ENCODE measurements at regions of chr16 and their contacts with region 1.

Region 1: DNA sequence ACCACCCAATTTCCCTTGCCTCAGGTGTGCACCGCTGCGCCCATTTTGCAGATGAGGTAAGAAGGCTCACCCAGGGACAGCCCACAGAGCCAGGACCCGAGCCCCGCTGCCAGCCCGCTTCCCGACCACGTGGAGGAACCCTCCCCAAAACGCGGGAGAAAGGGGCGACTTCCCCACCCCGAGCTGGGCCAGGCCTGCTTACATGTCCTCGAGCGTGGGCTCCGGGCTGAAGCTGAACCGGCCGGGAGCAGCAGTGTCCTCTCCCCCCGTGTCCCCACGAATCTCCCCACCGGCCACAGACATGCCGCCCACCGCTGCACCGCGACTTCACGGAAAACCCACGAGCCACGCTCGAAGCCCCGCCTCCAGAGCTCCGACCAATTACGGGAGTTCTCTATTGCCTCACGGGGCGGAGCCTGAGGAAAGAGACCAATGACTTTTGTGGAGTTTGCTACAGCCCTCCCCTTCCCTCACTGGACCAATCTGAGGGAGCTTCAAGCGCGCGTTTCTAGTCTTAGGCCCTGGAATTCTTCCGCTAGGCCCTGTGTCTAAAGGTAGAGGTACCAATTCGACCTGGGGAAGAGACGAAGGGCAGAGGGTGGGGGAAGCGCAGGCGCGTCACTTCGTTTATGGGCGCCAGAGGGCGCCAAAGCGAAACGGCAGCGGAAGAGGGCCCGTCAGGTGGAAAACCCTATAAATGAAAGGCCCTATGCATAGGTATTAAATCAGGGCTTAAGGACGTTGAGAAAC is at the start of gene DCTPP1:
- DNase-seq: peak; percentile 99
- ATAC-seq: peak; percentile 98
- H3K4me3 ChIP-seq: peak within 1 kb of the TSS; percentile 93
- H3K27ac ChIP-seq: peak within 1 kb of the TSS; percentile 81
- H3K4me1 ChIP-seq: peaks cover 13% of the 10 kb centered on the region
- H3K27me3 ChIP-seq: no peaks in the 10 kb centered on the region
- CTCF ChIP-seq: peak; percentile 85 to 92 (median 90)
- EP300 ChIP-seq: 0 out of 4 replicates have a peak, but pooled peaks of 1 of the 2 experiments have one; percentile 30
- POLR2A ChIP-seq: peak; percentile 84
- RAD21 ChIP-seq: peak; percentile 78
- polyA plus RNA-seq, gene DCTPP1: 76.6 to 162 TPM

Region 2: GRCh38 chr16:29729116-29729521 is 700.7 kb before region 1 on chr16:
- CTCF ChIA-PET with region 1: no interaction called
- POLR2A ChIA-PET with region 1: no interaction called
- RAD21 ChIA-PET with region 1: no interaction called
- SMC1A ChIA-PET with region 1: no interaction called
- in situ Hi-C with region 1: no loop called
- intact Hi-C with region 1: no loop called
- DNase-seq: no peak
- ATAC-seq: no peak
- H3K4me3 ChIP-seq: no peak overlapping the region
- H3K27ac ChIP-seq: no peak overlapping the region
- H3K4me1 ChIP-seq: peaks cover 17% of the 10 kb centered on the region
- H3K27me3 ChIP-seq: no peaks in the 10 kb centered on the region
- CTCF ChIP-seq: peak; percentile 44 to 56 (median 54); a peak in 5 of 6 replicates
- EP300 ChIP-seq: no peak
- POLR2A ChIP-seq: no peak
- RAD21 ChIP-seq: peak; percentile 36

Region 3: DNA sequence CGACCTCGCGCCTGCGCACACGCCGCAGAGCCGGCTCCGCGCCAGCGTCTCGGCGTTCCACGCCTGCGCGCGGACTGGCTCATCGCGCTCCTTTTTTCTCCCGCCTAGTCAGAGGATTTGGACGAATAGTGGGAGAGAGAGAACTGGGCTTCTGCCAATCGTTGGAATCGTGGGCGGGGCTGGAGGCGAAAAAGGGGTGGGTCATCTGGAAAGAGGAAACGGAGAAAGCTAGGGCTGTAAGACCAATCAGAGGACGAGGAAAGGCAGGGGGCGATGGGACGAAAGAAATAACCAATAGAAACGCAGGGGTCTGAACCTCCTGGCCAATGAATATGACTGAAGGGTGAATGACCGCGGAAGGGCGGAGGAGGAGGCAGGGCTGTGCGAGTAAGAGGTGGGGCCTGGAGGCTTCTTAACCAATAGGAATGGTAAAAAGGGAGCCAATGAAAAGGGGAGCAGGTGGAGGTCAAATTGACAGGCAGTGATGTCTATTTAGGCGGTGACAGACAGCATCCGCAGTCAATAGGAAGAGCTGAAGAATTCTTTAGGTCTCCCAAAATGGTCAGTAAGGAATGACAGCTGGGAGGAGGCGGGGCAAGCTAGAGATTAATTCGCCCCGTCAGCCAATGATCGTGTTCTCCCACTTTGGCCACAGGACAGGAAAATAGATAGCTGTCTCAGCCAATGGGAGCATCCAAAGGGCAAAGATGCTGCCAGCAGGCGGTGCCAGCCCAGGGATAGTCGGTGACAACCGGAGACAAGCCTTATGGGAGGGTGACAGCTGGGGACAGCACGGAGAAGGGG is 59.2 kb before region 1 on chr16 and contains the start of gene TBC1D10B:
- CTCF ChIA-PET with region 1: interaction called, 10 read pairs
- POLR2A ChIA-PET with region 1: interaction called, 4 read pairs
- RAD21 ChIA-PET with region 1: interaction called, 15 read pairs
- SMC1A ChIA-PET with region 1: no interaction called
- in situ Hi-C with region 1: no loop called
- intact Hi-C with region 1: no loop called
- DNase-seq: peak; percentile 100
- ATAC-seq: peak; percentile 91
- H3K4me3 ChIP-seq: peak within 1 kb of the TSS; percentile 97
- H3K27ac ChIP-seq: peak within 1 kb of the TSS; percentile 77
- H3K4me1 ChIP-seq: peaks cover 16% of the 10 kb centered on the region
- H3K27me3 ChIP-seq: no peaks in the 10 kb centered on the region
- CTCF ChIP-seq: peak in 2 of 3 experiments; percentile 13 to 24; a peak in 3 of 6 replicates
- EP300 ChIP-seq: no peak
- POLR2A ChIP-seq: no peak; the same call in 1 of the 2 replicates
- RAD21 ChIP-seq: no peak
- polyA plus RNA-seq, gene TBC1D10B: 2.2 to 4.4 TPM

Region 4: DNA sequence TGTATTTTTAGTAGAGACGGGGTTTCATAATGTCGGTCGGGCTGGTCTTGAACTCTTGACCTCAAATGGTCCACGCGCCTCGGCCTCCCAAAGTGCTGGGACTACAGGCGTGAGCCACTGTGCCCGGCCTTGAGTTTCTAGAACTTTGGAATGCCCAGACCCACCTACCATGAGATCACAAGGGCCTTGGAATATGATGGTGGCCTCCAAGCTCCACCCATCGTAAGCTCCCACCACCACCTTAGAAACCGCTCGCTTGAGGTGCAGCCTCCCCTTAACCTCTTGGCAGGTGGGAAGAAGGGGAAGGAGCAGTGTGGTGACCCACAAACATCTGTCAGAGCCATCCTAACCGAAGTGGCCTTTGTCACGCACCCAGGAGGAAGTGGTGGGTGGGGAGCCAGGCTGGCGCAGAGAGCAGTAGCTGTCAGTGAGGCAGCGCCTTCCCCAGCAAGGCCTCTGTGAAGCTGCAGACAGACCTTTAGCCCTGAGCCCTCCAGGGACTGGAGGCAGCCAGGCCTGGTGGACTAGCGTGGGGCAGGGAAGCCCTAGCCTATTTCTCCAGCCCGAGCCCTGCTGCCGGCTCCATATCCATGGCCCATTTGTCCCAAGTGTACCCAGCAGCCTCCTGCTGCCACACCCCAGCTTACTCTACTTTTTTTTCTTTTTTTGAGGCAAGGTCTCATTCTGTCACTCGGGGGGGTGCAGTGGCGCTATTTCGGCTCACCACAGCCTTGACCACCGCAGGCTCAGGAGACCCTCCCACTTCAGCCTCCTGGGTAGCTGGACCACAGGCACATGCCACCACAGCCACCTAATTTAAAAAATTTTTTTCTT is 28.9 kb after region 1 on chr16:
- CTCF ChIA-PET with region 1: interaction called, 52 read pairs
- POLR2A ChIA-PET with region 1: interaction called, 12 read pairs
- RAD21 ChIA-PET with region 1: interaction called, 44 read pairs
- SMC1A ChIA-PET with region 1: interaction called, 24 read pairs
- in situ Hi-C with region 1: no loop called
- intact Hi-C with region 1: loop called (anchors 2 kb)
- DNase-seq: peak; percentile 97
- ATAC-seq: peak; percentile 86
- H3K4me3 ChIP-seq: peak overlapping the region; percentile 9; the same call in 1 of the 2 replicates
- H3K27ac ChIP-seq: peak overlapping the region; percentile 89
- H3K4me1 ChIP-seq: peaks cover 47% of the 10 kb centered on the region
- H3K27me3 ChIP-seq: no peaks in the 10 kb centered on the region
- CTCF ChIP-seq: no peak
- EP300 ChIP-seq: peak; percentile 99 to 100
- POLR2A ChIP-seq: peak; percentile 96
- RAD21 ChIP-seq: 0 out of 2 replicates have a peak, but pooled peaks have one; percentile 22

Region 5: DNA sequence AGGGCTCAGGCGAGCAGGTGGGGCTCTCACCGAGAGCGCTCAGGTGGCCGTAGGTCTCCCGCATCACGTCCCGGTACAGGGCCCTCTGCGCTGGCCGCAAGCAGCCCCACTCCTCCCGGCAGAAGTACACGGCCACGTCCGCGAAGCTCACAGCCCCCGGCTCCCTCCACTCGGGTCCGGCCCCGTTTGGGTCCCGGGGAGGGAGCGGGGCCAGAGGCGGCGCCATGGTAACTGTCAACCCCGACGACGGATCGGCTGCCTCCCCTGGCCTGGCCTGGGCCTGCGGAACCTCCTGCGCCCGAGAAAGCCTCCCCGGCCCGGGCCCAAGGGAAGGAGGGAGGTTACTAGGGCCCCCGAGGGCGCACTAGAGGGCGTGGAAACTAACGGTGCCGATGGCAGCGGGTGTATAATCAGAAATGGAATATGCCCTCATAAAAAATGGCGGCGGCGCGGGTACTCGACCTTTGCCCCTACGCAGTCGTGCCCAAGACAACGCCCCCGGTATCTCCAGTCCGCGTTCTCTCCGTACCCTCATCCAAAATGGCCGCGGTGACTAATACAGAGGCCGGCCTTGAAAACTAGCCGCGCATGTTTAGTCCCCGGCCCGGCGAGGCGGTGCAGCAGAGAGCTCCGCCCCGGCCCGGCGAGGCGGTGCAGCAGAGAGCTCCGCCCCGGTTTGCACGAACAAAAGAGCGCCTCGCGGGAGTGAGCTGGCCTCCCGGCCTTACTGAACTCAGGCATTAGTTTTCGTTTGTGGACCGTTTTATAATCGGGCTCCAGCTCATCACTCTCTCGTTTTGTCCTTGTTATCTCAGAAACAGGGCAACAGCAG is 128.3 kb after region 1 on chr16 and contains the start of gene ZNF764:
- CTCF ChIA-PET with region 1: interaction called, 23 read pairs
- POLR2A ChIA-PET with region 1: interaction called, 3 read pairs
- RAD21 ChIA-PET with region 1: interaction called, 34 read pairs
- SMC1A ChIA-PET with region 1: interaction called, 11 read pairs
- in situ Hi-C with region 1: no loop called
- intact Hi-C with region 1: no loop called
- DNase-seq: peak; percentile 84
- ATAC-seq: peak; percentile 96
- H3K4me3 ChIP-seq: peak within 1 kb of the TSS; percentile 87
- H3K27ac ChIP-seq: peak within 1 kb of the TSS; percentile 85
- H3K4me1 ChIP-seq: no peaks in the 10 kb centered on the region
- H3K27me3 ChIP-seq: no peaks in the 10 kb centered on the region
- CTCF ChIP-seq: peak; percentile 1 to 9 (median 2); a peak in 1 of 6 replicates
- EP300 ChIP-seq: no peak
- POLR2A ChIP-seq: peak; percentile 68
- RAD21 ChIP-seq: no peak
- polyA plus RNA-seq, gene ZNF764: 0.61 to 1.6 TPM

Region 6: DNA sequence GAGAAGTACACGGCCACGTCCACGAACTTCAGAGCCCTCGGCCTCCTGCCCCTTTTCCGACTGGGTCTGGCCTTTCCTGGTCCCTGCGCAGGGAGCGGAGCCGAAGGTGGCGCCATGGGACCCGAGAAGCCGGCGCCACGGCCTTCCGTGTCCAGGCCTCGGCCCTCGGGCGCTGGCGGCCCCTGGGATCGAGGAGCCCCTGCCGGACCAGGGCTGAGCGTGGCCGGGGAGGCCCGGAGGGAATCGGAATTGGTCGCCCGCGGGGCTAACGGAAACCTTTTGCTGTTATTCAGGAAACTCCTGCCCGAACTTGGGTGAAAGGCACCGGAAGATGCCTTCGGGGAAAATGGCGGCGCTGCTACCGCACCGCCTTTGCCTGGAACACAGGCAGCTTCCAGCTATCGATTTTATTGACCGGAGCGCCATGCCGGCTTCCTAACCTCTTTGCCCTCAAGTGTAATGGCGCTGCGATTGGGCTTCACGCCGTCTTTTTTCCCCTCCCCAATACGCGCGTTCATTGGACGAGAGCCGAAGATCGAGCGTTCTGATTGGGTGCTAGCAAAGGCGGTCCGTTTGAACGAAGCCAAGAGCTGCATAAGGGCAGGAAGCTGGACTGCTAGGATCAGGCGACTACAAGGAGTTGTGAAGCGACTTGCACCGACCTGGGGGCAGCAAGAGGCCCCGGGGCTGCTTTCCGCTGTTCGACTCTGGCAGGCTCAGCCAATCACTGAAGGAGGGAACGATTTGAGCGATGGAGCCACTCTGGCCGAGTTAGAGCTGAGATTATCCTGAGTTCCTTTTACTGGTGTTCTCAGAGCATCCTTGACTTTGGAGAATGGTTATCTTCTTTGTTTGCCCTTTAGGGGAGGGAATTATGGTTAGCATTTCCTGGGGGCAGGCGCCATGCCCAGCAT is 180.3 kb after region 1 on chr16 and contains the start of gene ZNF689:
- CTCF ChIA-PET with region 1: interaction called, 19 read pairs
- POLR2A ChIA-PET with region 1: interaction called, 4 read pairs
- RAD21 ChIA-PET with region 1: interaction called, 29 read pairs
- SMC1A ChIA-PET with region 1: interaction called, 16 read pairs
- in situ Hi-C with region 1: no loop called
- intact Hi-C with region 1: no loop called
- DNase-seq: peak; percentile 93
- ATAC-seq: peak; percentile 91
- H3K4me3 ChIP-seq: peak within 1 kb of the TSS; percentile 98
- H3K27ac ChIP-seq: peak within 1 kb of the TSS; percentile 96
- H3K4me1 ChIP-seq: peaks cover 4% of the 10 kb centered on the region
- H3K27me3 ChIP-seq: no peaks in the 10 kb centered on the region
- CTCF ChIP-seq: no peak
- EP300 ChIP-seq: no peak
- POLR2A ChIP-seq: peak; percentile 74
- RAD21 ChIP-seq: no peak
- polyA plus RNA-seq, gene ZNF689: 4.7 to 6.3 TPM

Region 7: DNA sequence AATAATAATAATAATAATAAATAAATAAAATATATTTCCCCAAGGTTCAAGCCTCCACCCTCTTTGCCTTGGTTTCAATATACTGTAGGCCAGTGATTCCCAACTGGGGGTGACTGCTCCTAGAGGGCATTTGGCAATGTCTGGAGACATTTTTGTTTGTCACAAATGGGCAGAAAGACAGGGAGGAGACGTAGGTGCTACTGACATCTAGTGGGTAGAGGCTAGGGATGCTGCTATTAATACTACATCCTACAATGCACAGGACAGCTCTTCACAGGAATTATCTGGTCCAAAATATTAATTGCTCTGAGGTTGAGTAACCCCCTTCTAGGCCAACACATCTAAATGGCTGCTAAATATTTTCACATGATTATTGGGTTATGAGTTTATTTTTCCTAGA is 208.1 kb after region 1 on chr16:
- CTCF ChIA-PET with region 1: interaction called, 46 read pairs
- POLR2A ChIA-PET with region 1: interaction called, 4 read pairs
- RAD21 ChIA-PET with region 1: interaction called, 22 read pairs
- SMC1A ChIA-PET with region 1: interaction called, 5 read pairs
- in situ Hi-C with region 1: no loop called
- intact Hi-C with region 1: no loop called
- DNase-seq: no peak
- ATAC-seq: peak; percentile 38
- H3K4me3 ChIP-seq: no peak overlapping the region
- H3K27ac ChIP-seq: no peak overlapping the region
- H3K4me1 ChIP-seq: no peaks in the 10 kb centered on the region
- H3K27me3 ChIP-seq: no peaks in the 10 kb centered on the region
- CTCF ChIP-seq: peak; percentile 61 to 70 (median 63); a peak in 5 of 6 replicates
- EP300 ChIP-seq: no peak
- POLR2A ChIP-seq: no peak
- RAD21 ChIP-seq: peak; percentile 58

Measured in GM12878 (cell line).